ENCODE measurements at regions of chr6 and their contacts with region 1.

Region 1: GRCh38 chr6:38187325-38187724 is 367.8 kb downstream of the ZFAND3 start:
- DNase-seq: no peak
- H3K4me3 ChIP-seq: no peak overlapping the region
- H3K27ac ChIP-seq: no peak overlapping the region
- H3K4me1 ChIP-seq: peaks cover 3 to 20% (median 11%) of the 10 kb centered on the region in 4 experiments
- H3K27me3 ChIP-seq: no peaks in the 10 kb centered on the region
- CTCF ChIP-seq: peak; percentile 12 to 48 (median 35); a peak in 2 of 4 replicates
- EP300 ChIP-seq: no peak
- POLR2A ChIP-seq: no peak
- RAD21 ChIP-seq: peak; percentile 60 to 69

Region 2: DNA sequence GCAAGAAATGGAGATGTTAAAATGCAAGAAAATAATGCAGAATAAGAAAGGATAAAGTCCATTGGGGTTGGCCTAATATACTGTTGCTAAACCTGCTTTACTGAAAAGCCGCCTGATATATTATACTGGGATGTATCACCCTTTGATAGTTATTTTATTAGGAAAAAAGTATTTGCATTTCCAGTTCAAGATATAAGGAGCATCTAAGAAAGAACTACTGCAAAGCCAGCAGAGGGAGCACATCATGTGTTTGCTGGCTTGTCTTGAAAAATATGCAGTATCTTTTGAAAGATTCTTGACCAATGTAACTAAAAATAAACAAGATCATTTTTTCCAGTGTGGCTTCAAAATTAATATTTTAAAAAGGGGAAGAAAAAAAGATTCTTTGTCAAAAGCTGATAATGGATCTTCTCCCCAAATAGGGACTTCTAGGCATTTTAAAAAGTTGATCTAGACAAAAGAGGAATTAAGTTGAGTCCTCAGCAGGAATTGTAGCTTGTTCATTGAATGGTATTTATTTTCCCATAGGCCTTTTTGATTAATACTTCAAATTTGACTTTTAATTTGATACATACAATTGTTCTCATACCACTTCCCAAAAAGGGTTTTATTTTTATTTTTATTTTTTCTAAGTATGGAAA is 152.9 kb before region 1 on chr6:
- CTCF ChIA-PET with region 1: interaction called, 12 read pairs
- POLR2A ChIA-PET with region 1: no interaction called
- DNase-seq: no peak
- H3K4me3 ChIP-seq: no peak overlapping the region
- H3K27ac ChIP-seq: no peak overlapping the region
- H3K4me1 ChIP-seq: peaks cover 0 to 2% (median 0%) of the 10 kb centered on the region in 4 experiments; a peak in 1 of 7 replicates
- H3K27me3 ChIP-seq: no peaks in the 10 kb centered on the region
- CTCF ChIP-seq: peak in 1 of 3 experiments; percentile 45; a peak in 2 of 4 replicates
- EP300 ChIP-seq: no peak
- POLR2A ChIP-seq: no peak
- RAD21 ChIP-seq: peak; percentile 44 to 49

Region 3: GRCh38 chr6:38212579-38212978 is 25.3 kb after region 1 on chr6:
- CTCF ChIA-PET with region 1: no interaction called
- POLR2A ChIA-PET with region 1: no interaction called
- DNase-seq: peak in 1 of 2 experiments; percentile 17
- H3K4me3 ChIP-seq: no peak overlapping the region
- H3K27ac ChIP-seq: no peak overlapping the region
- H3K4me1 ChIP-seq: peaks cover 2 to 15% (median 8%) of the 10 kb centered on the region in 4 experiments
- H3K27me3 ChIP-seq: no peaks in the 10 kb centered on the region; a peak in 1 of 7 replicates
- CTCF ChIP-seq: no peak
- EP300 ChIP-seq: no peak
- POLR2A ChIP-seq: no peak
- RAD21 ChIP-seq: no peak